ENCODE measurements at regions of chr1 and their contacts with region 1.

Region 1: DNA sequence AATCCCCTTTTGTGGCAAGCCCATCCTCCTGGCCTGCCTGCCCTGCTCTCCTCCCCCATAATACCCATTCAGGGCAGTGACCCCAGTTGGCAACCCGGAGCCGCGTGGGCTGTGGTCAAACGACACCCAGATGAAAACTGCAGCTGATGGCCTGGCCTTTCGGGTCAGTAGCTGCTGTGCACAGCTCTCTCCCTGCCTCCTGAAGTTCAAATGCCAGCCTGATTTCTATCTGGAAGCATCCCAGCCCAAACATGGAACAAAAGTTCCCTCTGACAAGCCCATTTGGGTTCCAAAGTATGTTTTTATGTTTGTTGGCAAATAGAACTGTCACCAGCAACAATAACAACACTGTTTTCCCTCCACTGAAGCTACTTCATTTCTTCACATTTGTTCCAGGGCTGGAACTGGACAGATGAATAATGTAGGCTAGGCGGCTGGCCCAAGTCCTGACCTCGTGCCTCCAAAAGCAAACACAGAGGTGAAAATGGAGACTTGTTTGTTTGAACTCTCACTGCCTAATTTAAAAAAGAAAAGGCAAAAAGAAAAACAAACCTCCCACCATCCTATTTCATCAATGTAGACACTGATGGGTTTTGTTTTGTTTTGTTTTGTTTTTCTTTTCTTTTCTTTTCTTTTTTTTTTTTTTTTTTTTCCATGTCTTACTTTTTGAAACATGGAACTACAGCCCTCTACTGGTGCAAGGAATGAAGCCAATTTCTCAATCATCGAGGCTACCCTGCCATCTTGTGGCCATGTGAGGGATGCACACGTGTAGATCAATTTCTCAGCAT is 179.0 kb downstream of the ADSS2 start:
- DNase-seq: peak; percentile 92
- ATAC-seq: peak; percentile 61
- H3K4me3 ChIP-seq: no peak overlapping the region
- H3K27ac ChIP-seq: no peak overlapping the region
- H3K4me1 ChIP-seq: peaks cover 9% of the 10 kb centered on the region; the same call in 1 of the 2 replicates
- H3K27me3 ChIP-seq: no peaks in the 10 kb centered on the region
- CTCF ChIP-seq: peak; percentile 100
- POLR2A ChIP-seq: no peak
- RAD21 ChIP-seq: peak; percentile 99

Region 2: GRCh38 chr1:243325305-243325890 is 947.3 kb before region 1 on chr1:
- CTCF ChIA-PET with region 1: no interaction called
- POLR2A ChIA-PET with region 1: no interaction called
- dilution Hi-C with region 1: no loop called
- in situ Hi-C with region 1: no loop called
- intact Hi-C with region 1: loop called (anchors 5 kb)
- DNase-seq: peak; percentile 82
- ATAC-seq: peak; percentile 88
- H3K4me3 ChIP-seq: no peak overlapping the region
- H3K27ac ChIP-seq: no peak overlapping the region
- H3K4me1 ChIP-seq: peaks cover 4% of the 10 kb centered on the region; the same call in 1 of the 2 replicates
- H3K27me3 ChIP-seq: no peaks in the 10 kb centered on the region
- CTCF ChIP-seq: peak; percentile 90
- POLR2A ChIP-seq: no peak
- RAD21 ChIP-seq: peak; percentile 95

Region 3: GRCh38 chr1:243471754-243472745 is 800.6 kb before region 1 on chr1:
- CTCF ChIA-PET with region 1: no interaction called
- POLR2A ChIA-PET with region 1: no interaction called
- dilution Hi-C with region 1: no loop called
- in situ Hi-C with region 1: loop called (anchors 25 kb)
- intact Hi-C with region 1: loop called (anchors 1 kb)
- DNase-seq: peak; percentile 56
- ATAC-seq: no peak
- H3K4me3 ChIP-seq: no peak overlapping the region
- H3K27ac ChIP-seq: no peak overlapping the region
- H3K4me1 ChIP-seq: peaks cover 11% of the 10 kb centered on the region
- H3K27me3 ChIP-seq: no peaks in the 10 kb centered on the region
- CTCF ChIP-seq: no peak
- POLR2A ChIP-seq: no peak
- RAD21 ChIP-seq: no peak

Region 4: DNA sequence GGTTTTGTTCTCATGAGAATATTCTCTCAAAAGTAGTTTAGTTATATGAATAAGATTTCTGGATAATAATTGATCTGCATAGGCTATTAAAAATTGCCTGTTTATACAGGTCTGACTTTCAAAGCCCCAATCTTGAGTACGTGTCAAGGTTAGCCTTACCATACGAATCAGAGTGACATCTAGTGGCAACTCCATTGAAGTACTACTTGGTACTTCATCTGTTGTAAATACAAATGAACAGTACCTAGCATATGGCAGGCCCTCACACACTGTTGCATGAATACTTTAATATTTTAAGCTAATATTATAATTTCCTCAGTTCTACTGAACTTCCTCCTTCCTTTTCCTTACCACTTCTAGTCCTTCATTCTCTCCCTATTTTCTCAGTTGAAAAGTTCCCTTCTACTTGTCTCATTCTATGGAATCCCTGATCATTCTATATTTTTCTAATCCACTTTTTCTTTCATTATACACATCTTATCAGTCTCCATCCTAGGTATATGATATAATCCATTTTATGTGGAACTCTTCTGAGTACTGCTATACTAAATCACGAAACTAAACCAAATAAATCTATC is 523.9 kb before region 1 on chr1:
- CTCF ChIA-PET with region 1: no interaction called
- POLR2A ChIA-PET with region 1: no interaction called
- dilution Hi-C with region 1: no loop called
- in situ Hi-C with region 1: loop called (anchors 25 kb)
- intact Hi-C with region 1: loop called (anchors 2 kb)
- DNase-seq: peak; percentile 88
- ATAC-seq: peak; percentile 98
- H3K4me3 ChIP-seq: no peak overlapping the region
- H3K27ac ChIP-seq: no peak overlapping the region
- H3K4me1 ChIP-seq: peaks cover 7% of the 10 kb centered on the region
- H3K27me3 ChIP-seq: no peaks in the 10 kb centered on the region
- CTCF ChIP-seq: peak; percentile 78
- POLR2A ChIP-seq: no peak
- RAD21 ChIP-seq: peak; percentile 84

Region 5: DNA sequence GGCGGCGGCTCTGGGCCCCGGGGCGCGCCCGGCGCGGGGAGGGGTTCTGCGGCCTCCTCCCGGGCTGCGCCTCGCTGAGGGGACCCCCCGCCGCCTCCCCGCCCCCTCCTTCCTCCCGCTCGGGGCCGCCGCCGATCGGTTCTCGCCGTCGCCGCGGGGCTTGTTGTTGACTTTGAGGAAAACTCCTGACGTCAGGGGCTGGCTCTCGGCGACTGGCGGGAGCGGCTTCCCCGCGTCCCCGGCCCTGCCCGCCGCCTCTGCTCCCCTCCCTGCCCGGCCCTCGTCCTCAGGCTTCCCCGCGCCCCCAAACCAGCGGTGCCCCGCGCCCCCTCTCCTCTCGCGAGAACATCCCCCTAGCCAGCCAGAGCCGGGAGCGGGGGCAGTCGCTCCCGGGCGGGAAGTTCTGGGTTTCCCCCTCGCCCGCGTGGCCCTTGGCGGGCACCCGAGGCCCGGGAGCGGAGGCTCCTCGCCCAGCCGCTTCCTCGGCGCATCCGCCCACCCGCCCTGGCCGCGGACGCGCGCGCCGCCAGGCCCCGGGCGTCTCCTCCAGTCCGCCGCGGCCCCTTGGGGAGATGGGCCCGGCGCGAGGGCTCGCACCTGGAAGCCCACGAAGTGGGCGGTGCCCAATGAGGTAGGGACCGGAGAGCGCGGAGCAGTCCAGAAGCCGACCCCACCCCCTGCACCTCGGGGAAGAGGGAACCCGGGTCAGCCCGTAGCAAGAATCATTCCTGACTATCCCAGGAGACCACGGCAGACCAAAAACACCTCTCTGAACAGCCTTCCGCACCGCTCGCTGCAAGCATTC is 422.0 kb before region 1 on chr1:
- CTCF ChIA-PET with region 1: no interaction called
- POLR2A ChIA-PET with region 1: no interaction called
- dilution Hi-C with region 1: no loop called
- in situ Hi-C with region 1: loop called (anchors 10 kb)
- intact Hi-C with region 1: loop called (anchors 2 kb)
- DNase-seq: peak; percentile 70
- ATAC-seq: peak; percentile 73
- H3K4me3 ChIP-seq: peak overlapping the region; percentile 86
- H3K27ac ChIP-seq: peak overlapping the region; percentile 78
- H3K4me1 ChIP-seq: no peaks in the 10 kb centered on the region; the same call in 1 of the 2 replicates
- H3K27me3 ChIP-seq: no peaks in the 10 kb centered on the region
- CTCF ChIP-seq: no peak
- POLR2A ChIP-seq: peak; percentile 66; the same call in 1 of the 2 replicates
- RAD21 ChIP-seq: no peak

Region 6: GRCh38 chr1:244047621-244048471 is 224.8 kb before region 1 on chr1:
- CTCF ChIA-PET with region 1: no interaction called
- POLR2A ChIA-PET with region 1: no interaction called
- dilution Hi-C with region 1: no loop called
- in situ Hi-C with region 1: loop called (anchors 25 kb)
- intact Hi-C with region 1: loop called (anchors 1 kb)
- DNase-seq: peak; percentile 99
- ATAC-seq: peak; percentile 97
- H3K4me3 ChIP-seq: peak overlapping the region; percentile 96
- H3K27ac ChIP-seq: peak overlapping the region; percentile 80
- H3K4me1 ChIP-seq: peaks cover 2% of the 10 kb centered on the region; the same call in 1 of the 2 replicates
- H3K27me3 ChIP-seq: peaks cover 6% of the 10 kb centered on the region
- CTCF ChIP-seq: no peak
- POLR2A ChIP-seq: peak; percentile 59; the same call in 1 of the 2 replicates
- RAD21 ChIP-seq: no peak

Region 7: GRCh38 chr1:244451951-244452795 is 179.5 kb after region 1 on chr1:
- CTCF ChIA-PET with region 1: no interaction called
- POLR2A ChIA-PET with region 1: no interaction called
- dilution Hi-C with region 1: no loop called
- in situ Hi-C with region 1: no loop called
- intact Hi-C with region 1: loop called (anchors 2 kb)
- DNase-seq: peak; percentile 99
- ATAC-seq: peak; percentile 96
- H3K4me3 ChIP-seq: peak overlapping the region; percentile 16
- H3K27ac ChIP-seq: no peak overlapping the region
- H3K4me1 ChIP-seq: peaks cover 8% of the 10 kb centered on the region
- H3K27me3 ChIP-seq: no peaks in the 10 kb centered on the region
- CTCF ChIP-seq: peak; percentile 61
- POLR2A ChIP-seq: peak; percentile 7; the same call in 1 of the 2 replicates
- RAD21 ChIP-seq: peak; percentile 46